ENCODE measurements at regions of chr18 and their contacts with region 1.

Region 1: DNA sequence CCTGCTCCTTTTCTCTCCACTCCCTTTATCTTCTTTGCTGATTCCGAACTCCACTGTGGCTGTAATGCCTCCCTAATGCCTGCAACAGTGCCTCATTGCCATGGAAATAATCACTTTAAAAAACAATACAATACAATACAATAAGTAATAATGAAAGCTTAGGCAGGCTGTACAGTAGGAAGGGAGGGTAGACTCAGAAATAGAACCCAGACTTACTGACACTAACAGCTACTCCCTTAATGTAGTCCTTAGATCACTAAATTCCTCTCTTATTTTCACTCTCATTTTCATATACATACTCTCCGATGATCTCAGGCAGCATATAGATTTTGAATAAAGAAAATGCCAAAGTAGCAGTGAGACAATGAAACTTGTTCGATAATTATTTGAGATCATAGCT is 70.2 kb downstream of the DLGAP1 start:
- DNase-seq: no peak
- ATAC-seq: no peak
- H3K4me3 ChIP-seq: no peak overlapping the region
- H3K27ac ChIP-seq: no peak overlapping the region
- H3K4me1 ChIP-seq: no peaks in the 10 kb centered on the region
- H3K27me3 ChIP-seq: no peaks in the 10 kb centered on the region
- CTCF ChIP-seq: no peak
- EP300 ChIP-seq: no peak
- POLR2A ChIP-seq: no peak
- RAD21 ChIP-seq: no peak

Region 2: DNA sequence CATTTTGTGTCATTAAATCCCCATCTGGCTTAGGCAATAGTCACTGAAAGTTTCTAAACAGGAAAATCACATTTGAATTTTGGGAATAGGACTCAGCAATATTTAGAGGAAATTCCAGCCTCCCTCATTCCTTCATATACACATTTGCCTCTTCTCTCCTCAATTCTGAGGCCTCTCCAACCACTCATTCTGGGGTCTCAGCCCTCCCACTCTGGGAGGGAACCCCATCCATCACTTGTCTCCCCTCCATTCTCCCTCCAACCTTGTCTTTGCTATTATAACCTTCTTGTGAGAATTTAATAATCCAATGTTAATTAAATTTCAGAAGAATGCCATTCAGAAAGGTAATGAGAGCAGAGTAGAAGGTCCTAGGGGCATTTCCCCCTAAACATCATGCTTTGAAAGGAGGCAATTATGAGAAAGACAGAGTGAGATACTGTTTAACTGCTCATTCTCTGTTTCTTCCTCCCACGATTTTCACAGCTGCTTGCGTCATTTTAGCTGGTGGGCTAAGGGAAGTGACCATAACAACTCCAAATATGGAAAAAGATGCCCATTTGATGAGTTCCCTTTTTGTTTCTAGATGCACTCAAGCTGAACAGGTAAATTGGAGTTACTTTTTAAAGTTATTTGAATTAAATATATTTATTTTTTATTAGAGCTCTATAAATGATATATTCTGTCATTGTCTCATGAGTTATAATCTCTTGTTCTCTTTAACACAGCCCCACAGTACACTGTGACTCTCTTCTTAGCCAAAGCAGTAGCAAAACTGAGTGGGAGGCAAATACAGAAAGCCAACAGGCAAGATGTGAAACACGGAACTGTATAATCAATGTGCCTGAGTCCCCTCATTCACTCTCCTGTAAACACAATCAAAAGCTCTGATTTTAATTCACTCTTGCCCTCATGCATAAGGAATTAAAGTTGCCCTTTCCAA is 64.9 kb before region 1 on chr18:
- CTCF ChIA-PET with region 1: no interaction called
- POLR2A ChIA-PET with region 1: no interaction called
- in situ Hi-C with region 1: no loop called
- intact Hi-C with region 1: loop called (anchors 10 kb)
- DNase-seq: no peak
- ATAC-seq: no peak
- H3K4me3 ChIP-seq: no peak overlapping the region
- H3K27ac ChIP-seq: no peak overlapping the region
- H3K4me1 ChIP-seq: no peaks in the 10 kb centered on the region
- H3K27me3 ChIP-seq: no peaks in the 10 kb centered on the region; a peak in 1 of 5 replicates
- CTCF ChIP-seq: no peak
- EP300 ChIP-seq: no peak
- POLR2A ChIP-seq: no peak
- RAD21 ChIP-seq: no peak